ENCODE measurements at regions of chr16 and their contacts with region 1.

Region 1: DNA sequence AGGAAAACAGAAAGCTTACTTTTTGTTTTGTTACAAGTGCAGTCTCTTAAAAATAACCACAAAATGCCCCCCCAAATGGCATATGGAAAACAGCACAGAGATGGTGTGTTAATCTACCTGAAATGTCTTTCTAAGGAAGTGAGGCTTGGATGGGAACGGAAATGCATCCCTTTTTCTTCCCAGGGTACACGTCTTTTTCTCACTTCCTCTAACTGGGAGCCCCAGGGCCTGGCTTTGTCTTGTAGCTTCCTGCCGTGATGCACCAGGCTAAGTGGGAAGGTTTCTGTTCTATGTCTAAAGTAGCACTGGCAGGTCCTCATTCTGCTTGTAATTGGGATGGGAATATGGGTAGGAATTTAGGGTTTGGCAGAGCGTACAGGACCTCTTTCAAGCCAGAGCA is 52.5 kb upstream of the CACNG3 start:
- DNase-seq: no peak
- ATAC-seq: no peak

Region 2: GRCh38 chr16:23879735-23880373 is 323.8 kb before region 1 on chr16:
- intact Hi-C with region 1: loop called in 1 of 2 experiments (anchors 5 kb)
- DNase-seq: no peak
- ATAC-seq: no peak

Region 3: GRCh38 chr16:24357511-24357910 is 153.8 kb after region 1 on chr16:
- intact Hi-C with region 1: no loop called
- DNase-seq: no peak
- ATAC-seq: no peak

Measured in left colon (tissue), 2 donors.